Ascending aorta (tissue), 2 donors: ENCODE measurements at regions of chr21 and their contacts with region 1.

Region 1: DNA sequence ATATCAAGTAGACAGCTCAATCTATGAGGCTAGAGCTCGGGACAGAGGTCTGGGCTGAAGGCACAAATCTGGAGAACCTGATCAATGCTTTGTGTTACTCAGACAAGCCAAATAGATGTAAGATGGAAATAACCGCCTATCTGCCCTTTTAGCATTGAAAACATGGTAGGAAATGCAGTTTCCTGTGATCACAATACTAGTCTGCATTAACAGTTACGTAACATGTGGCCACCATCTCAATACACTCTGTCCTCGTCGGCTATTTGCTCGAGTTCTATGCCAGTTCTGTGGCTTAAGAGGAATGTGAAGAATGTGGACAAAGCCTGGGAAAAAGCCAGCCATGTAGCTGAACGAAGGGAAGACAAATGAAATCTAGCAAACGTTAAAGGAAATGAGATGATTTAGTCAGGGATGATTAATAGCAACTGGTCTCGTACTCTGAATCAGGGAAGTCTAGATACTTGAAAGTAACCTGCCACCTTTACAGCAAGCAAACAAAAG is 73.3 kb downstream of the HSF2BP start:
- DNase-seq: peak in 1 of 2 donors; percentile 87
- H3K4me3 ChIP-seq: no peak overlapping the region
- H3K27ac ChIP-seq: peak overlapping the region; percentile 74 to 88
- H3K4me1 ChIP-seq: peaks cover 5 to 19% of the 10 kb centered on the region in 2 donors
- H3K27me3 ChIP-seq: no peaks in the 10 kb centered on the region
- CTCF ChIP-seq: no peak

Region 2: GRCh38 chr21:43611598-43612369 is 25.8 kb after region 1 on chr21:
- intact Hi-C with region 1: no loop called
- DNase-seq: peak in 1 of 2 donors; percentile 79
- H3K4me3 ChIP-seq: no peak overlapping the region
- H3K27ac ChIP-seq: no peak overlapping the region
- H3K4me1 ChIP-seq: no peaks in the 10 kb centered on the region
- H3K27me3 ChIP-seq: no peaks in the 10 kb centered on the region
- CTCF ChIP-seq: peak; percentile 24 to 65 (median 63)

Region 3: DNA sequence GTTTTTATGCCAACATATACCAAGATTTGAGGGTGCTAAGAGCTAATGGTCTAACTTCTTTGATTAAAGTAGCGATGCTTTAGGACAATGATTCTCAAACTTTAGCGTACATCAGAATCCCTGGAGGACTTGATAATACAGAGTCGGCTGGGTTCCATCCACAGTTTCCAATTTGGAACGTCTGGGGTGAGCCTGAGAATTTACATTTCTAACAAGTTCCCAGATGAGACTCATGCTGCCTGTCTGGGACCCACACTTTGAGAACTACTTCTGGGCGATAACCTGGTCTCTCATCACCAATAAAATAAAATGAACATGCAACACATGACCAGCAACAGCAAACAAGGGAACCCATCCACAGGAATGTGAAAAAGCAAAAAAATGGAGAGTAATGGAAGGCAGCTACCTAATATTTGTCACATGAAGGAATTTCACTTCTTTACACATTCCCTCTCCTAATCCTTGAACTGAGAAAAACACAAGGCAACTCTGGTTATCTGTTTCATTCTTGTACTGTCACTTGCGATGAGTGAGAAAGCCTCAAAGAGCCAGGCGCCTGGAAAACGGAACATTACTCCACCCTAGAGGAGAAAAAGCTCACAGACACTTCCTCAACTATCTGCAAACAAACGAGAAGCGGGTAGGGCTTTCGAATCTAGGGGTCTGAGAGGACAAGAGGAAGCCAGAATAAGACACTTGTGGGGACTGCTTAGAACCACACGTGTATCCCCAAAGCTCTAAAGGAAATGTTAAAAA is 59.3 kb after region 1 on chr21:
- intact Hi-C with region 1: loop called (anchors 2 kb)
- DNase-seq: peak in 1 of 2 donors; percentile 80
- H3K4me3 ChIP-seq: peak overlapping the region in 1 of 2 donors; percentile 6
- H3K27ac ChIP-seq: peak overlapping the region in 1 of 2 donors; percentile 16
- H3K4me1 ChIP-seq: no peaks in the 10 kb centered on the region
- H3K27me3 ChIP-seq: no peaks in the 10 kb centered on the region
- CTCF ChIP-seq: peak; percentile 12 to 51 (median 17)